ENCODE measurements at regions of chr2 and their contacts with region 1.

Region 1: GRCh38 chr2:27162151-27163121 is 13.6 kb downstream of the TCF23 start:
- DNase-seq: peak in 1 of 2 experiments; percentile 21
- ATAC-seq: peak in 1 of 2 experiments; percentile 59; a peak in 3 of 6 replicates
- H3K4me3 ChIP-seq: no peak overlapping the region
- H3K27ac ChIP-seq: 0 out of 6 replicates have a peak overlapping the region, but pooled peaks of 1 of the 2 experiments have one; percentile 2
- H3K4me1 ChIP-seq: no peaks in the 10 kb centered on the region
- CTCF ChIP-seq: no peak
- EP300 ChIP-seq: no peak
- POLR2A ChIP-seq: no peak
- RAD21 ChIP-seq: no peak

Region 2: GRCh38 chr2:27145685-27146084 is 16.8 kb before region 1 on chr2:
- CTCF ChIA-PET with region 1: interaction called, 10 read pairs
- POLR2A ChIA-PET with region 1: no interaction called
- DNase-seq: no peak
- ATAC-seq: no peak
- H3K4me3 ChIP-seq: no peak overlapping the region
- H3K27ac ChIP-seq: no peak overlapping the region
- H3K4me1 ChIP-seq: no peaks in the 10 kb centered on the region
- CTCF ChIP-seq: no peak
- EP300 ChIP-seq: no peak
- POLR2A ChIP-seq: no peak
- RAD21 ChIP-seq: no peak